Gastrocnemius medialis (tissue), 4 donors: ENCODE measurements at regions of chr17 and their contacts with region 1.

Region 1: DNA sequence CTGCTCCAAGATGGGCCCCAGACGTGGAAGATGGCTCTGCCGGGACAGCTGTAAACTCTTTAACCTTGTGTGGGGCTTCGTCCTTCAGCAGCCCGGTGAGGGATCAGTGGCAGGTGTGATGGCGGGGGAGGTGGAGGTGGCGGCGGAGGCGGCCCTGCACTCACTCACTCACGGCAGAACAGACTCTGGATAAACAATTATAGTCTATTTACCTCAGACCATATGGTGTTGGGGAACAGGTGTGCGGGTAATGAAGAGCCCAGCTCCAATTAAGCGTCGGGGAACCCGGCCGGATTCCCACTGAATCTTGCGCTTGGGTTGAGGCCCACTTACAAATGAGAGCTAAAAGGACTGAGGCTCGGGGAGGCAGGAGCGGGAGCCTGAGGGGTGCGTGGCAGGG is 104.3 kb upstream of the SDK2 start:
- DNase-seq: no peak
- ATAC-seq: no peak
- H3K4me3 ChIP-seq: no peak overlapping the region
- H3K27ac ChIP-seq: no peak overlapping the region
- H3K4me1 ChIP-seq: no peaks in the 10 kb centered on the region
- H3K27me3 ChIP-seq: peaks cover 0 to 6% (median 0%) of the 10 kb centered on the region in 3 donors
- CTCF ChIP-seq: no peak
- POLR2A ChIP-seq: no peak

Region 2: DNA sequence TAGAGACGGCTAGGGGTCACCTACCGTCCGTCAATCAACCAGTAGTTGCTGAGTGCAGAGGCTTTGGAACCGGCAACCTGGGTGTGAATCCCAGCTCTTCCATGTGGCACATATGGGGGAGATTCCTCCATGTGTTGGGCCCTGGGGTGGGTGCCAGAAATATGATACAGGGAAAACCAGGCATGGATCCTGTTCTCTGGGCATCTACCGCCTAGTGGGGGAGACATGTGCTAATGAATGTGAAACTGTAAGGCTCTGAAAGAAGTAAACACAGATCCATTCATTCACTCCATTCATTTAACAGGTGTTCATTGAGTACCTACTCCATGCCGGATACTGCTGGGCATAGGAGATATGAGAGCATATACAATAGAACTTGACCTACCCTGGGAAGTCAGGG is 64.7 kb before region 1 on chr17:
- in situ Hi-C with region 1: no loop called
- intact Hi-C with region 1: loop called (anchors 10 kb)
- DNase-seq: no peak
- ATAC-seq: no peak
- H3K4me3 ChIP-seq: no peak overlapping the region
- H3K27ac ChIP-seq: no peak overlapping the region
- H3K4me1 ChIP-seq: no peaks in the 10 kb centered on the region
- H3K27me3 ChIP-seq: peaks cover 0 to 3% (median 0%) of the 10 kb centered on the region in 3 donors
- CTCF ChIP-seq: no peak
- POLR2A ChIP-seq: no peak

Region 3: DNA sequence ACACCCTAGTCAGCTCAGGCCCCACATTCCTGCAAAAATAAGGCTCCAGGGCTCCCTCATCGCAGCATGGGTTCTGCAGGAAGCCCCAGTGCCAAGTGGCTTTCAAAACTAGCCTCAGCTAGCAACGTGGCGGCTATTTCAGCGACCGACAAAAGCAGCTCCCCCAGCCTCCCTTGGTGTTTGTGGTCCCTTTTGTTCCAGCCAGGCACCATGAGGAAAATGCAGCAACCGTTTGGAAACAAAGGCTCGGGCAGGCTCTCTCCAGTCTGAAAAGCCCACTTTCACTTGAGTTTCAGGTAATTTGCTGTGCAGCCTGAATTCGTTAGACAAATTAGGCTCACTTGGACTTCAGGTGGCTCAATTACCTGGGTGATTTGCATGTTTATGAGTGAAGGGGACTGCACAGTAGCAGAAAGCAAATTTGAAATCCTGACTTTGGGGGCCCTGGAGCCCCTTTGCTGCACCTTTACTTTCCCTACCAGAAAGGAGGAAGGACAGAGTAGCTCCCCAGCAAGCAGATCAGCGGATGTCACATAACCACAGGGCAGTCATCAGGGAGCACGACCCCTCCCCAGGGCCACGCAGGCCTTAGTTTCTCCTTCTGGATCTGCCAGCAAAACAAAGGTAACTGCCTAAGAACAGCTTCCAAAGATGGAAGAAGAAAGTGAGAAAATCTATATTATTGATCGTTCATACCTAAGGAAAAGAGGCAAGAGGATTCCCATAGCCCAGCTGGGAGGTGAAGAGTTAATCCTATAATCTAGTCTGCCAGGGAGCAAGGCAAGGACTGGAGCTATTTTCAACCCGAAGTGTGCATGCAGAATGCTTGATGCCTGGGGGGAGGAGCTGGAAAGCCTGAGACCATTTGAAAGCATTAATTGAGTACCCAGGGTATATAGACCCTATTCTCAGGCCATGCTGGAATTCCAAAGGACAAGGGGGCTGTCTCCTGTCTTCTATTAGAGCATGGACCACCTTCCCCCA is 38.9 kb after region 1 on chr17:
- in situ Hi-C with region 1: no loop called
- intact Hi-C with region 1: no loop called
- DNase-seq: no peak
- ATAC-seq: no peak
- H3K4me3 ChIP-seq: no peak overlapping the region
- H3K27ac ChIP-seq: no peak overlapping the region
- H3K4me1 ChIP-seq: no peaks in the 10 kb centered on the region
- H3K27me3 ChIP-seq: peaks cover 9 to 30% (median 11%) of the 10 kb centered on the region in 3 donors
- CTCF ChIP-seq: no peak
- POLR2A ChIP-seq: no peak